ENCODE measurements at regions of chr19 and their contacts with region 1.

Region 1: GRCh38 chr19:40716655-40717324 is at the starts of genes COQ8B and ITPKC:
- DNase-seq: peak; percentile 74
- H3K4me3 ChIP-seq: peak within 1 kb of the TSS; percentile 70
- H3K27me3 ChIP-seq: no peaks in the 10 kb centered on the region
- CTCF ChIP-seq: no peak
- polyA plus RNA-seq, gene COQ8B: 22.7 and 35.3 TPM in 2 replicates
- polyA plus RNA-seq, gene ITPKC: 8.9 and 11.9 TPM in 2 replicates

Region 2: GRCh38 chr19:40806488-40807468 is 90.0 kb after region 1 on chr19:
- CTCF ChIA-PET with region 1: interaction called, 12 read pairs
- POLR2A ChIA-PET with region 1: interaction called, 4 read pairs
- DNase-seq: peak; percentile 86
- H3K4me3 ChIP-seq: no peak overlapping the region
- H3K27me3 ChIP-seq: no peaks in the 10 kb centered on the region
- CTCF ChIP-seq: peak; percentile 95